ENCODE measurements at regions of chr10 and their contacts with region 1.

Region 1: DNA sequence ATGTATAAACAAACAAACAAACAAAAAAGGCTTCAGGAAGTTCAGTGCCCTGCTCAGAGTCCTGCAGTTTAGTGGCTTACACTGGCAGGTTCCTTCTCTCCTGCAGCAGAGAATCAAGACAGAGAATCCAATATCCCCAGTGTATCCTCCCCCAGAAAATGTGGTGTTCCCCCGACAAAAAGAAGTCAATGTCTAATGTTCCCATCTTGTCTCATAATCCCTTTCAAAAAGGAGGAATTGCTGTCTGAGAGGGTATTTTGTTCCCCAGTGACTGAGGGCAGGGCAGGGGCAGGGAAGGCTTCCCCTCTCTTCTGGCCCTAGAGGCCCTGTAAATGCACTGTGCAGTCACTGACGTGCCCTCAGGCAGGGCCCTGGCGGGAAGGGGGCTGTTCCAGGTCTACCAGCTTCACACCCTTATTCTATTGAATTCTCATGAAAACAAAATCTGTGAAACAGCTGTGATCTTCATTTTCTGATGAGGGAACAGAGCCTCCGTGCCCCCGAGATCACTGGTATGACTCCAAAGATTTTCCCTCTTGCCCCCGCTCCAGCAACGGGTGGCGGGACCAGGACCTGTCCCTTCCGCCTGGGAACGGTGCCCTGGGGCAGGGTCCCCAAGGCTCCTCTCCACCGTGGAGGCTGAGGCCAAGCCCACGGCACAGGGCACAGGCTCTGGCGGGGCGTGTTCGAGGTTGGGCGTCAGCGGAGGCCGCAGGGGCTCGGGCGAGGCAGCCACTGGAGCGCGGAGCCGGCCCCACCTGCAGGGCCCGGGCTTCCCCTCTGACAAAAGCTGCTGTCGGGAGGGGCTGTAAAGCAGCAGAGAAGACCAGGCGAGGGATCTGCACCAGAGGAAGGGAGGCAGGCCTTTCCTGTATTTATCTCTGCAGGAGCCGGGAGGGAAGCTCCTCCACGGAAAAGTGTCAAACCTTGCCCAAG is 13.4 kb upstream of the WDFY4 start:
- DNase-seq: peak in 1 of 5 donors; percentile 55
- ATAC-seq: peak in 2 of 4 donors; percentile 29 to 62
- H3K4me3 ChIP-seq: peak overlapping the region in 2 of 12 donors; percentile 12 to 14
- H3K27ac ChIP-seq: peak overlapping the region in 5 of 12 donors; percentile 4 to 39 (median 35)
- H3K4me1 ChIP-seq: peaks cover 0 to 5% (median 0%) of the 10 kb centered on the region in 12 donors
- H3K27me3 ChIP-seq: no peaks in the 10 kb centered on the region
- CTCF ChIP-seq: no peak
- POLR2A ChIP-seq: no peak

Region 2: DNA sequence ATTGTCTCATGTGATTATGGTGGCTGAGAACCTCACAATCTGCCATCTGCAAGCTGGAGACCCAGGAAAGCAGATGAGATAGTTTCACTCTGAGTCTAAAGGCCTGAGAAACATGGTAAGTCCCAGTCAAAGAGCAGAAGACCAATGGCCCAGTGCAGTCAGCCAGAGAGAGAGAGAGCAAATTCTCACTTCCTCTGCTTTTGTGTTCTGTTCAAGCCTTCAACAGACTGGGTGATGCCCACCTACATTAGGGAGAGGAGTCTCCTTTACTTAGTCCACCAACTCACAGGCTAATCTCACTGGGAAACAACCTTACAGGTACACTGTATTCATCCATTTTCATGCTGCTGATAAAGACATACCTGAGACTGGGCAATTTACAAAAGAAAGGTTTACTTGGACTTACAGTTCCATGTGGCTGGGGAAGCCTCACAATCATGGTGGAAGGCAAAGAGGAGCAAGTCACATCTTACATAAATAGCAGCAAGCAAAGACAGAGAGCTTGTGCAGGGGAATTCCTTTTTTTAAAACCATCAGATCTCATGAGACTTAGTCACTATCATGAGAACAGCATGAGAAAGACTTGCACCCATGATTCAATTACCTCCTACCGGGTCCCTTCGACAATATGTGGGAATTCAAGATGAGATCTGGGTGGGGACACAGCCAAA is 392.0 kb before region 1 on chr10:
- intact Hi-C with region 1: no loop called
- DNase-seq: no peak
- ATAC-seq: no peak
- H3K4me3 ChIP-seq: no peak overlapping the region
- H3K27ac ChIP-seq: no peak overlapping the region
- H3K4me1 ChIP-seq: no peaks in the 10 kb centered on the region
- H3K27me3 ChIP-seq: no peaks in the 10 kb centered on the region
- CTCF ChIP-seq: no peak
- POLR2A ChIP-seq: no peak

Region 3: DNA sequence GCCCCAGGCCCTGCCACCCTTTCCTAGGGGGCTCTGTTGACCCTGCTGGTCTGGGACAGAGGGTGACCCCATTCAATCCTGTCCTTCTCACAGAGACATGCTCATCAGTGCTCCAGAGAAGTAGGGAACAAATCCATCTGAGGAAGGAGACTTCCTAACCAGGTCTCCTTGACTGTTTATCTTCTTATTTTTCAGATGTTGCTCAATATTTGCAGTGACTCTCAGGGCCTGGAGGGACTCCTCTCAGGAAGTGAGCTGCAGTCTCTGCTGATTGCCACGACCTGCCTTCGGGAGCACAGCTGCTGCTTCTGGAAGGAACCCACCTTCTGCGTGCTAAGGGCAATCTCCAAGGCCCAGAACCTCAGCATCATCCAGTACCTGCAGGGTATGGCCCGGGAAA is 54.4 kb after region 1 on chr10:
- intact Hi-C with region 1: no loop called
- DNase-seq: no peak
- ATAC-seq: peak in 1 of 4 donors; percentile 49
- H3K4me3 ChIP-seq: no peak overlapping the region
- H3K27ac ChIP-seq: no peak overlapping the region
- H3K4me1 ChIP-seq: peaks cover 0 to 17% (median 0%) of the 10 kb centered on the region in 12 donors
- H3K27me3 ChIP-seq: no peaks in the 10 kb centered on the region
- CTCF ChIP-seq: no peak
- POLR2A ChIP-seq: no peak

Region 4: GRCh38 chr10:48736596-48736995 is 65.3 kb after region 1 on chr10:
- intact Hi-C with region 1: loop called in 1 of 10 experiments (anchors 5 kb)
- DNase-seq: no peak
- ATAC-seq: no peak
- H3K4me3 ChIP-seq: no peak overlapping the region
- H3K27ac ChIP-seq: no peak overlapping the region
- H3K4me1 ChIP-seq: no peaks in the 10 kb centered on the region
- H3K27me3 ChIP-seq: no peaks in the 10 kb centered on the region
- CTCF ChIP-seq: no peak
- POLR2A ChIP-seq: no peak

Region 5: GRCh38 chr10:48759113-48759901 is 88.1 kb after region 1 on chr10:
- intact Hi-C with region 1: loop called in 1 of 10 experiments (anchors 10 kb)
- DNase-seq: no peak
- ATAC-seq: no peak
- H3K4me3 ChIP-seq: no peak overlapping the region
- H3K27ac ChIP-seq: no peak overlapping the region
- H3K4me1 ChIP-seq: peaks cover 0 to 17% (median 0%) of the 10 kb centered on the region in 12 donors
- H3K27me3 ChIP-seq: no peaks in the 10 kb centered on the region
- CTCF ChIP-seq: no peak
- POLR2A ChIP-seq: no peak

Region 6: DNA sequence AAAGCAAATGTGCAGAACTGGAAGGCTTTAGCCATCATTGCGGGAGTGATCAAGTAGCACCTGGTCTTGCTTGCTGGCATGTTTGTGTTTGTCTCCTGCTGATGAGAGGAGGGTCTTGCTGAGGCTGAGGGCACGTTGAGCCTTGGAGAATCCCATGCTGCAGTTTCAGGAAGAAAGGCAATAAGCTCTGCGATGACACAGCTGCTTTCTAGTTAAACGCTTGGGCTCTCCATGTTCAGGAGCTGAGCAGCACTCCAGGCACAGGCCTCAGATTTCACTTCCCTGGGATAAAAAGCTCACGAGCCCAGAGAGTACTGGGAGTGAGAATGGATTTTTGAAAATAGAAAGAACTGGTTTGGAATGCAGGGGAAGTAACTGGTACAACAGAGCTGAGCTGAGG is 167.6 kb after region 1 on chr10:
- intact Hi-C with region 1: loop called in 1 of 10 experiments (anchors 10 kb)
- DNase-seq: no peak
- ATAC-seq: no peak
- H3K4me3 ChIP-seq: no peak overlapping the region
- H3K27ac ChIP-seq: peak overlapping the region in 2 of 12 donors; percentile 46 to 58
- H3K4me1 ChIP-seq: peaks cover 3 to 26% (median 14%) of the 10 kb centered on the region in 12 donors
- H3K27me3 ChIP-seq: no peaks in the 10 kb centered on the region
- CTCF ChIP-seq: no peak
- POLR2A ChIP-seq: no peak

Region 7: GRCh38 chr10:48968036-48968435 is 296.8 kb after region 1 on chr10:
- intact Hi-C with region 1: loop called in 2 of 10 experiments (anchors 5 to 10 kb)
- DNase-seq: peak in 1 of 5 donors; percentile 46
- ATAC-seq: peak in 3 of 4 donors; percentile 21 to 59 (median 46)
- H3K4me3 ChIP-seq: no peak overlapping the region
- H3K27ac ChIP-seq: no peak overlapping the region
- H3K4me1 ChIP-seq: no peaks in the 10 kb centered on the region
- H3K27me3 ChIP-seq: no peaks in the 10 kb centered on the region
- CTCF ChIP-seq: no peak
- POLR2A ChIP-seq: no peak